Activated naive CD4-positive, alpha-beta T cell treated with anti-CD3 and anti-CD28 coated beads for 36 hours (primary cell): ENCODE measurements at regions of chr4 and their contacts with region 1.

Region 1: GRCh38 chr4:473570-474457 is 25.1 kb downstream of the ZNF721 start:
- DNase-seq: peak; percentile 97
- H3K4me3 Mint-ChIP-seq: peak overlapping the region; percentile 99
- H3K27ac Mint-ChIP-seq: peak overlapping the region; percentile 99
- H3K4me1 Mint-ChIP-seq: peaks cover 19% of the 10 kb centered on the region
- H3K27me3 Mint-ChIP-seq: no peaks in the 10 kb centered on the region

Region 2: GRCh38 chr4:337143-337931 is 136.5 kb before region 1 on chr4 and contains the start of gene ZNF141:
- CTCF ChIA-PET with region 1: interaction called, 3 read pairs
- intact Hi-C with region 1: loop called (anchors 1 kb)
- DNase-seq: peak; percentile 96
- H3K4me3 Mint-ChIP-seq: peak within 1 kb of the TSS; percentile 99
- H3K27ac Mint-ChIP-seq: peak within 1 kb of the TSS; percentile 99
- H3K4me1 Mint-ChIP-seq: peaks cover 22% of the 10 kb centered on the region
- H3K27me3 Mint-ChIP-seq: no peaks in the 10 kb centered on the region
- total RNA-seq, gene ZNF141: 21.2 to 23.2 TPM

Region 3: DNA sequence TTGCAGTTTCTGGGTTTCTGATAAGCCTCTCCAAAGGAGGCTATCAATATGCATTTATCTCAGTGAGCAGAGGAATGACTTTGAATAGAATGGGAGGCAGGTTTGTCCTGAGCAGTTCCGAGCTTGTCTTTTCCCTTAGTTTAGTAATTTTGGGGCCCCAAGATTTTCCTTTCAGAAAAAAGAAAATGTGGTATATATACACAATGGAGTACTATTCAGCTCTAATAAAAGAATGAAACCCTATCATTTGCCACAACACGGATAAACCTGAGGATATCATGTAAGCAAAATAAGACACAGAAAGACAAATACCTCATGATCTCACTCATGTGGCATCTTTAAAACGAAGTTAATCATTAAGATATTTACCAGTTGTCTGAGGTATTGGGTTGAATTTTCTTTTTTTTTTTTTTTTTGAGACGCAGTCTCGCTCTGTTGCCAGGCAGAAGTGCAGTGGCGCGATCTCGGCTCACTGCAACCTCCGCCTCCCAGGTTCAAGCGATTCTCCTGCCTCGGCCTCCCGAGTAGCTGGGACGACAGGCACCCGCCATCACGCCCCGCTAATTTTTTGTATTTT is 24.6 kb after region 1 on chr4:
- CTCF ChIA-PET with region 1: no interaction called
- intact Hi-C with region 1: loop called (anchors 1 kb)
- DNase-seq: no peak
- H3K4me3 Mint-ChIP-seq: peak overlapping the region; percentile 94
- H3K27ac Mint-ChIP-seq: peak overlapping the region; percentile 90
- H3K4me1 Mint-ChIP-seq: peaks cover 40% of the 10 kb centered on the region
- H3K27me3 Mint-ChIP-seq: no peaks in the 10 kb centered on the region

Region 4: DNA sequence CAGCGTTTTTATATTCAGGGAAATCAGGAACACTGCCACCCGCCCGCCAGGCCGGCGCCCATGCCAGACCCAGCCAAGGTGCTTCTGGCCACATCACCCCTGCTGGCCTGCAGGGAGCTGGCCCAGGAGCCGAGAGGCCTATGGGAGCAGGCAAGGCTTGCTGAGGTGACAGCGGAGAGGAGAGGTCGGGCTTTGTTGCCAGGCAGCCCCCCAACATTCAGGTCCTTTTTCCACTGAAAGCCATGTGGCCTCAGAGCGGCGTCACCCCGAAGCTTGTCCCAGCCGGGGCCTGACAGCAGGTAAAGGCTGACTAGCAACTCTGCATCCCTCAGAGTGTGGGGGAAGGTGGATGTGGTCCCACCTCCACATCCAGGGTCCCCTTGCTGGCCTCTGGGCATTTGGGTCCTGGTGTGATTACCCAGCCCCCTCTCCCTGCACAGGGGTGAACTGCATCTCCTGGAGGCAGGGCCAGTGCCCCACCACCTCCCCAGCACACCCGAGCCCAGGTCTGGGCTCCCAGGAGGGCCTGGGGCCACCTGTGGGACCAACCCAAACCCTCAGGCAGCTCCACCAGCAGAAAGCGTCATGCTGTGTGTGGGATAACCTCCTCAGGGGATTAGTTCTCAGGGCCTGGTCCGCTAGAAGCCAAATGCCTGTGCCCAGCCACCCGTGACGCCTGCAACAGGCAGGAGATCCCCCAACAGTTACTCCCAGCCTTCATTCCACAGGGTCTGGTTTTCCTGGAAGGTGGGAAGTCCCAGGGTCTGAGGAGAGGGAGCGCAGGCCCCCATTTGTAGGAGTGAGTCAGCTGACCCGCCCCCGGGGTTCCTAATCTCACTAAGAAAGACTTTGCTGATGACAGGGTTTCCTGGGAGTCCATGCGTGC is 151.1 kb after region 1 on chr4 and contains the start of gene PDE6B:
- CTCF ChIA-PET with region 1: no interaction called
- intact Hi-C with region 1: no loop called
- DNase-seq: no peak
- H3K4me3 Mint-ChIP-seq: no peak within 1 kb of the TSS
- H3K27ac Mint-ChIP-seq: no peak within 1 kb of the TSS
- H3K4me1 Mint-ChIP-seq: no peaks in the 10 kb centered on the region
- H3K27me3 Mint-ChIP-seq: peaks cover 8% of the 10 kb centered on the region
- total RNA-seq, gene PDE6B: 17.4 to 18.1 TPM